ENCODE measurements at regions of chr6 and their contacts with region 1.

Region 1: GRCh38 chr6:29752451-29753308 is 29.4 kb downstream of the HLA-F start:
- DNase-seq: peak; percentile 91
- H3K4me3 Mint-ChIP-seq: peak overlapping the region; percentile 90
- H3K27ac Mint-ChIP-seq: peak overlapping the region; percentile 81
- H3K4me1 Mint-ChIP-seq: peaks cover 23% of the 10 kb centered on the region
- H3K27me3 Mint-ChIP-seq: peaks cover 11% of the 10 kb centered on the region

Region 2: DNA sequence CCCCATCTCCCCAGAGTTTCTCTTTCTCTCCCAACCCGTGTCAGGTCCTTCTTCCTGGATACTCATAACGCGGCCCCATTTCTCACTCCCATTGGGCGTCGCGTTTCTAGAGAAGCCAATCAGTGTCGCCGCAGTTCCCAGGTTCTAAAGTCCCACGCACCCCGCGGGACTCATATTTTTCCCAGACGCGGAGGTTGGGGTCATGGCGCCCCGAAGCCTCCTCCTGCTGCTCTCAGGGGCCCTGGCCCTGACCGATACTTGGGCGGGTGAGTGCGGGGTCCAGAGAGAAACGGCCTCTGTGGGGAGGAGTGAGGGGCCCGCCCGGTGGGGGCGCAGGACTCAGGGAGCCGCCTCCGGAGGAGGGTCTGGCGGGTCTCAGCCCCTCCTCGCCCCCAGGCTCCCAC is 29.4 kb before region 1 on chr6 and contains the start of gene HLA-F:
- CTCF ChIA-PET with region 1: interaction called, 10 read pairs
- POLR2A ChIA-PET with region 1: interaction called, 8 read pairs
- intact Hi-C with region 1: no loop called
- DNase-seq: peak; percentile 90
- H3K4me3 Mint-ChIP-seq: peak within 1 kb of the TSS; percentile 86
- H3K27ac Mint-ChIP-seq: peak within 1 kb of the TSS; percentile 92
- H3K4me1 Mint-ChIP-seq: peaks cover 58% of the 10 kb centered on the region
- H3K27me3 Mint-ChIP-seq: no peaks in the 10 kb centered on the region
- total RNA-seq, gene HLA-F: 256 to 270 TPM

Region 3: DNA sequence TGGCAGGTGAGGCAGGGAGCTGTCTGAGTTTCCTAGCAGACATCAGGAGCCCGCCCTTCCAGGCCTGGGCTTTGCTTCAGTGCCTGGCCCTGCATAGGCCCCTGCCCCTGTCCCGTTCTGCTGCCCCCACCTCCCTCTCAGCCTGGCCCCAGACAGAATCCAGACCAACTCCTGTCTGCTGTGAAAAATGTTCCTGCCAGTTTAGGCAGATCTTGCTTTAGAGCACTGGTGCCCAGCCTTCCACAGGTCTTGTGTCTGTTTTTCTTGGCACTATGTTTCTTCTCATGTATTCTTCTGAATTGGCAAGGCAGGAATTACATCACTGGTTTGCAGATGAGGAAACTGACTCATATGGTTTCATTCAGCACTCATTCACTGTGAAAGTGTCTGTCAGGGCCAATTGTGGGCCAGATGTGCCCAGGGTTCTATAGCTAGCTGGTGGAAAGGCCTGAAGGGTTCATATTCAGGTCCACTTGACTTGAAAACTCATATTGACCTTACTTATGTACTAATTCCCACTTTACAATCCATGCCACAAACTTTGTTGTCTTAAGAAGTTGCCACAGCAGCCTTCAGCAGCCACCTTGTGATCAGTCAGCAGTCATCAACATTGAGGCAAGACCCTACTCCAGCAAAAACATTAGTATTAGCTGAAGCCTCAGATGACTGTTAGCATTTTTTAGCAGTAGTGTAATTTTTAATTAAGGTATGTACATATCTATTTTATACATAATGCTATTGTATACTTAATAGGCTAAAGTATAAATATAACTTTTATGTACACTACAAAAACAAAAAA is 11.0 kb after region 1 on chr6:
- CTCF ChIA-PET with region 1: interaction called, 11 read pairs
- POLR2A ChIA-PET with region 1: interaction called, 3 read pairs
- intact Hi-C with region 1: no loop called
- DNase-seq: peak; percentile 55
- H3K4me3 Mint-ChIP-seq: no peak overlapping the region
- H3K27ac Mint-ChIP-seq: peak overlapping the region; percentile 43
- H3K4me1 Mint-ChIP-seq: peaks cover 10% of the 10 kb centered on the region
- H3K27me3 Mint-ChIP-seq: no peaks in the 10 kb centered on the region

Region 4: GRCh38 chr6:29834564-29835436 is 82.1 kb after region 1 on chr6:
- CTCF ChIA-PET with region 1: interaction called, 13 read pairs
- POLR2A ChIA-PET with region 1: no interaction called
- intact Hi-C with region 1: loop called (anchors 5 kb)
- DNase-seq: peak; percentile 65
- H3K4me3 Mint-ChIP-seq: no peak overlapping the region
- H3K27ac Mint-ChIP-seq: no peak overlapping the region
- H3K4me1 Mint-ChIP-seq: no peaks in the 10 kb centered on the region
- H3K27me3 Mint-ChIP-seq: peaks cover 38% of the 10 kb centered on the region

Region 5: GRCh38 chr6:29942275-29943052 is 189.8 kb after region 1 on chr6 and contains the start of gene HLA-A:
- CTCF ChIA-PET with region 1: no interaction called
- POLR2A ChIA-PET with region 1: no interaction called
- intact Hi-C with region 1: no loop called
- DNase-seq: peak; percentile 96
- H3K4me3 Mint-ChIP-seq: peak within 1 kb of the TSS; percentile 89
- H3K27ac Mint-ChIP-seq: peak within 1 kb of the TSS; percentile 98
- H3K4me1 Mint-ChIP-seq: peaks cover 51% of the 10 kb centered on the region
- H3K27me3 Mint-ChIP-seq: peaks cover 2% of the 10 kb centered on the region
- total RNA-seq, gene HLA-A: 1,413 to 1,470 TPM